ENCODE measurements at regions of chr12 and their contacts with region 1.

Region 1: GRCh38 chr12:9813821-9814809 is 13.2 kb upstream of the KLRF1 start:
- DNase-seq: peak; percentile 96
- ATAC-seq: peak; percentile 97
- H3K4me3 Mint-ChIP-seq: peak overlapping the region; percentile 81
- H3K27ac Mint-ChIP-seq: peak overlapping the region; percentile 67
- H3K4me1 Mint-ChIP-seq: peaks cover 12% of the 10 kb centered on the region
- H3K27me3 Mint-ChIP-seq: peaks cover 8% of the 10 kb centered on the region

Region 2: GRCh38 chr12:9797722-9798619 is 16.1 kb before region 1 on chr12:
- CTCF ChIA-PET with region 1: interaction called, 104 read pairs
- POLR2A ChIA-PET with region 1: no interaction called
- intact Hi-C with region 1: no loop called
- DNase-seq: peak; percentile 81
- ATAC-seq: peak; percentile 84
- H3K4me3 Mint-ChIP-seq: peak overlapping the region; percentile 72
- H3K27ac Mint-ChIP-seq: peak overlapping the region; percentile 92
- H3K4me1 Mint-ChIP-seq: peaks cover 42% of the 10 kb centered on the region
- H3K27me3 Mint-ChIP-seq: no peaks in the 10 kb centered on the region

Region 3: GRCh38 chr12:9883175-9883574 is 69.1 kb after region 1 on chr12:
- CTCF ChIA-PET with region 1: interaction called, 10 read pairs
- POLR2A ChIA-PET with region 1: no interaction called
- intact Hi-C with region 1: no loop called
- DNase-seq: no peak
- ATAC-seq: no peak
- H3K4me3 Mint-ChIP-seq: no peak overlapping the region
- H3K27ac Mint-ChIP-seq: no peak overlapping the region
- H3K4me1 Mint-ChIP-seq: peaks cover 5% of the 10 kb centered on the region
- H3K27me3 Mint-ChIP-seq: no peaks in the 10 kb centered on the region

Region 4: DNA sequence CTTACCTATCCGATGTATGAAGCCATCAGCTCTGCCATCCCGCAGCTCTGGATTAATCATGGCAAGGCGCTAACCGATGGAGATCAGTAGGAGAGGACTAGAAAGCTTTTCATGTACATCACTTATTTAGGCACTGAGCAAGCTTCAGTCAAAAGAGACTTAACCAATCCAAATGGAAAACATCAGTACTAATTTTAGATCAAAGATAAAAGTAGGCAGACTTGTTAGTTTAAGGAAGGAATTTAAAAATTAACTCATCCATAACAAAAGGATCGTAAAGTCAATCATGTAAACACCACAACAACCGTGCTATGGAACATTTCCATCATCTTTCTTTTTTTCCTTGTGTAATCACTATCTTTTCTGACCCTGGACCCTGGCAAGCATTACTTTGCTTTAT is 118.2 kb after region 1 on chr12 and contains the start of gene CLEC2A:
- CTCF ChIA-PET with region 1: interaction called, 48 read pairs
- POLR2A ChIA-PET with region 1: no interaction called
- intact Hi-C with region 1: no loop called
- DNase-seq: no peak
- ATAC-seq: no peak
- H3K4me3 Mint-ChIP-seq: no peak within 1 kb of the TSS
- H3K27ac Mint-ChIP-seq: no peak within 1 kb of the TSS
- H3K4me1 Mint-ChIP-seq: no peaks in the 10 kb centered on the region
- H3K27me3 Mint-ChIP-seq: peaks cover 4% of the 10 kb centered on the region
- total RNA-seq, gene CLEC2A: not detected

Region 5: DNA sequence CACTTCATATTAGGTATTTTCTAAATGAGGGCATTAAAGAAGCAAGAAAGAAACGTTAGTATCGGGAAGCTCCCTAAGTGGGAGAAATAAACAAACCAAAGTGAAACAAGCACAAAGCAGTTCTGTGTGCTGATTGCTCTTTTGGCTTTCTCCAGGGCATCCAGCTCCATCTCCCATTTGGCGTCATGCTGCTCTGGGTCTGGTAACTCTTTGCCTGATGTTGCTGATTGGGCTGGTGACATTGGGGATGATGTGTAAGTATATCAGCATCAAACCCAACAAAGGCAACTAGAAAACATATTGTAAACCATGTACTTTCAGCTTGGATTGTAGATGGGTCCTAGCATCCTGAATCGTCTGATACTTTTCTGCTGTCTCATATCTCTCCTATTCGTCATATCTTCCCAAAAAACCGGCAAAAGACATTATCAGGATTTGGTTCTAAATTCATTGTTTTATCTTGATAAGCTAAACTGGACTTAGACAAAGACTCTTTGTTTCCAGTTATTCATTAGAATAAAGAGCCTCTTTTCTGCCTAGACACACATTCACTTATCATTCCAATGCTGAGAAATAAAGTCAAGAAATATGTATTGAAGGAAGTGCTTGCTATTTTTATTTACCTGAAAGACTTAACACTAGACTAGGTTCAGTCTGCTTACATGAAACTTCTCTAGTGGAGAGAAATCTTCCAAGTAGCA is 198.7 kb after region 1 on chr12:
- CTCF ChIA-PET with region 1: interaction called, 15 read pairs
- POLR2A ChIA-PET with region 1: no interaction called
- intact Hi-C with region 1: loop called (anchors 2 to 10 kb)
- DNase-seq: no peak
- ATAC-seq: no peak
- H3K4me3 Mint-ChIP-seq: no peak overlapping the region
- H3K27ac Mint-ChIP-seq: no peak overlapping the region
- H3K4me1 Mint-ChIP-seq: no peaks in the 10 kb centered on the region
- H3K27me3 Mint-ChIP-seq: peaks cover 7% of the 10 kb centered on the region

Region 6: GRCh38 chr12:10035569-10035968 is 221.5 kb after region 1 on chr12:
- CTCF ChIA-PET with region 1: no interaction called
- POLR2A ChIA-PET with region 1: no interaction called
- intact Hi-C with region 1: no loop called
- DNase-seq: no peak
- ATAC-seq: no peak
- H3K4me3 Mint-ChIP-seq: no peak overlapping the region
- H3K27ac Mint-ChIP-seq: no peak overlapping the region
- H3K4me1 Mint-ChIP-seq: no peaks in the 10 kb centered on the region
- H3K27me3 Mint-ChIP-seq: peaks cover 2% of the 10 kb centered on the region